ENCODE measurements at regions of chr1 and their contacts with region 1.

Region 1: GRCh38 chr1:186375088-186375953 is at the starts of genes ODR4 and TPR:
- DNase-seq: peak; percentile 92 to 98 (median 97)
- ATAC-seq: peak; percentile 88
- H3K4me3 ChIP-seq: peak within 1 kb of the TSS; percentile 98
- H3K4me3 Mint-ChIP-seq: peak within 1 kb of the TSS; percentile 90 to 99 (median 98)
- H3K27ac ChIP-seq: peak within 1 kb of the TSS; percentile 93
- H3K27ac Mint-ChIP-seq: peak within 1 kb of the TSS; percentile 91 to 99 (median 97)
- H3K4me1 ChIP-seq: peaks cover 24 to 25% of the 10 kb centered on the region in 2 donors
- H3K4me1 Mint-ChIP-seq: peaks cover 28 to 70% (median 54%) of the 10 kb centered on the region in 7 donors
- H3K27me3 ChIP-seq: no peaks in the 10 kb centered on the region
- H3K27me3 Mint-ChIP-seq: no peaks in the 10 kb centered on the region
- total RNA-seq, gene ODR4: 13.6 to 19.6 (median 18.3) TPM
- total RNA-seq, gene TPR: 118 to 195 (median 158) TPM

Region 2: DNA sequence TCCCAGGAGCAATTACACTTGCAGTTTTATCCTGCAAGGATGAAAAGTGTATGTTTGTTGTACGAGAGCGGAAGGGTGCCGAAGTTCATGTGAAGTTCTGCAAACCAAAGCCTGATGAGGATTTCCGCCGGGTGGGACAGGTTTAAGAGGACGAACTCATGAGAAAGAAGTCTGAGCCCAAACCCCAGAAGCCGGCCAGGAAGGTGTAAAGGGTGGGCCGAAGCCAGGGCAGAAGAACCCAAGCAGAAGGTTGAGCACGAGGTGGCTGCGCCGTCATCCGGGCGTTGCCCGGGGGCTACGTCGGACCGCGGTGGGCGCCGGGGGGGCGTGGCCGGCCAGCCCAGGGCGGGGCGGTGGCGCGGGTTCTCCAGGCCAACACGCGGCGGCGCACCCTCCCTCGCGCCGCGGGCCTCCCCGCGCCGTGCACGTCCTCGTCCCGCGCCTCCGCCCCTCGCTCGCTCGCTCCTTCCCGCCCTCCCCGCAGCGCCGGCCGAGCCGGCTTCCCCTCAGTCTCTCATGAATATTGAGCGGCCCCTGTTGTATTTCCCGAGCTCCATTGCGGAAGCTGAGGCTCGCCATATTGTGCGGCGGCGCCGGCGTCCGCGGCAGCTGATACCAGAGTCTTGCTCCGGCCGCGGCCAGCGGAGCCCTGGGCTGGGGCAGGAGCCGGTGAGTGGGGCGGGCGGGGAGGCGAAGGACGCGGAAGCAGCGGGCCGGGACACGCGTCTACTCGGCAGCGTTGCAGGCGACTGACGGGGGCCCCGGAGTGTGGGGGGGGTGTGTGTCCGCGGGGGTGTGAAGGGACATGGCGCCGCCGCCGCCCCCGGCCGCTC is 1330.1 kb before region 1 on chr1 and contains the start of gene RNF2:
- CTCF ChIA-PET with region 1: no interaction called
- POLR2A ChIA-PET with region 1: no interaction called
- intact Hi-C with region 1: loop called (anchors 1 to 2 kb)
- DNase-seq: peak; percentile 64 to 80 (median 77)
- ATAC-seq: peak; percentile 95
- H3K4me3 ChIP-seq: peak within 1 kb of the TSS; percentile 74
- H3K4me3 Mint-ChIP-seq: peak within 1 kb of the TSS; percentile 87 to 96 (median 92)
- H3K27ac ChIP-seq: peak within 1 kb of the TSS; percentile 75
- H3K27ac Mint-ChIP-seq: peak within 1 kb of the TSS; percentile 69 to 96 (median 88)
- H3K4me1 ChIP-seq: peaks cover 11 to 15% of the 10 kb centered on the region in 2 donors
- H3K4me1 Mint-ChIP-seq: peaks cover 27 to 56% (median 45%) of the 10 kb centered on the region in 7 donors
- H3K27me3 ChIP-seq: no peaks in the 10 kb centered on the region
- H3K27me3 Mint-ChIP-seq: peaks cover 0 to 26% (median 0%) of the 10 kb centered on the region in 5 donors
- total RNA-seq, gene RNF2: 14.9 to 27.7 (median 19.6) TPM

Region 3: DNA sequence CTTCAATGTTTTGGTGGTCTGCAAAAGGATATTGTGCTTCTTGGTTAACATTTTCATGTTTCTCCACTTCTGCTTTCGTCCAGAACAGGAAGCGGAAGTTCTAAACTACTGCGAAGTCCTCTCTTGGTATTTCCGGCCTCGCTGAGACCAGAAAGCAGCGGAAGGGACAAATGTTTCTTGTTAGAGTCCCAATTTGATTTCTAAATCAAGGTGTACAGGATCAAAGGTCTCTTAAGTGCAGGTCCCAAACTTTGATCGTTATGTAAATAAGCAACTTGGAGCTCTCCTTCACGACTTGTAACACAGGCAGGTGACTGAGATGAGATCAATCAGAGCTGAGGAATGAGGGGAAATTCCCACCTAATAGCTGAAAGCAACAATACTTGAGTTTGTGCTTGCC is 681.2 kb before region 1 on chr1:
- CTCF ChIA-PET with region 1: no interaction called
- POLR2A ChIA-PET with region 1: no interaction called
- intact Hi-C with region 1: loop called in 1 of 2 experiments (anchors 5 kb)
- DNase-seq: peak in 4 of 9 donors; percentile 20 to 26 (median 22)
- ATAC-seq: peak; percentile 60
- H3K4me3 ChIP-seq: peak overlapping the region; percentile 31
- H3K4me3 Mint-ChIP-seq: peak overlapping the region; percentile 73 to 85 (median 78)
- H3K27ac ChIP-seq: peak overlapping the region; percentile 50
- H3K27ac Mint-ChIP-seq: peak overlapping the region; percentile 77 to 96 (median 88)
- H3K4me1 ChIP-seq: peaks cover 0 to 17% of the 10 kb centered on the region in 2 donors
- H3K4me1 Mint-ChIP-seq: peaks cover 11 to 27% (median 14%) of the 10 kb centered on the region in 7 donors
- H3K27me3 ChIP-seq: no peaks in the 10 kb centered on the region
- H3K27me3 Mint-ChIP-seq: peaks cover 0 to 27% (median 9%) of the 10 kb centered on the region in 5 donors

Region 4: GRCh38 chr1:186283374-186283773 is 91.9 kb before region 1 on chr1:
- CTCF ChIA-PET with region 1: no interaction called
- POLR2A ChIA-PET with region 1: interaction called, 3 read pairs
- intact Hi-C with region 1: loop called in 1 of 2 experiments (anchors 1 kb)
- DNase-seq: no peak
- ATAC-seq: no peak
- H3K4me3 ChIP-seq: no peak overlapping the region
- H3K4me3 Mint-ChIP-seq: peak overlapping the region in 3 of 10 donors; percentile 29 to 57 (median 35)
- H3K27ac ChIP-seq: no peak overlapping the region
- H3K27ac Mint-ChIP-seq: peak overlapping the region in 4 of 9 donors; percentile 8 to 89 (median 87)
- H3K4me1 ChIP-seq: peaks cover 0 to 12% of the 10 kb centered on the region in 2 donors
- H3K4me1 Mint-ChIP-seq: peaks cover 19 to 48% (median 39%) of the 10 kb centered on the region in 7 donors
- H3K27me3 ChIP-seq: no peaks in the 10 kb centered on the region
- H3K27me3 Mint-ChIP-seq: peaks cover 0 to 3% (median 0%) of the 10 kb centered on the region in 5 donors

Region 5: DNA sequence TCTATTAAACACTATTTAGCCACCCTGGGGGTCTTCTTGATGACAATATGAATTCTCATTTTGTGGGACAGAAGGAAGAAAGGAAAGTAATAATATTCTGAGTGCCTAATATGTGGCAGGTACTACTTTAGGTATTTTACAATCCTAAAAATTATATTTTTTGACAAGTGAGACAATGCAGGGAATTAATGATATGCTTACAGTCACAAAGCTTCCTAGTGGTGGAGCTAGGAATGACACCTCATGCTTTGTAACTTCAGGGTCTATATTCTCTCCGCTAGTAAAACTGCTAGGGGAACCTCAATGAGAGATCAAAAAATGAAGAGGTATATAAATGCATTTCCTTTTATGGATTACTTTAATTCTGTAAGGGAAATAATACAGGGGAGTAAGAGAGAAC is 44.6 kb before region 1 on chr1:
- CTCF ChIA-PET with region 1: interaction called, 4 read pairs
- POLR2A ChIA-PET with region 1: interaction called, 4 read pairs
- intact Hi-C with region 1: loop called (anchors 5 kb)
- DNase-seq: no peak
- ATAC-seq: no peak
- H3K4me3 ChIP-seq: no peak overlapping the region
- H3K4me3 Mint-ChIP-seq: no peak overlapping the region
- H3K27ac ChIP-seq: no peak overlapping the region
- H3K27ac Mint-ChIP-seq: peak overlapping the region in 4 of 9 donors; percentile 28 to 67 (median 49)
- H3K4me1 ChIP-seq: no peaks in the 10 kb centered on the region
- H3K4me1 Mint-ChIP-seq: peaks cover 0 to 9% (median 4%) of the 10 kb centered on the region in 7 donors
- H3K27me3 ChIP-seq: no peaks in the 10 kb centered on the region
- H3K27me3 Mint-ChIP-seq: no peaks in the 10 kb centered on the region

Region 6: DNA sequence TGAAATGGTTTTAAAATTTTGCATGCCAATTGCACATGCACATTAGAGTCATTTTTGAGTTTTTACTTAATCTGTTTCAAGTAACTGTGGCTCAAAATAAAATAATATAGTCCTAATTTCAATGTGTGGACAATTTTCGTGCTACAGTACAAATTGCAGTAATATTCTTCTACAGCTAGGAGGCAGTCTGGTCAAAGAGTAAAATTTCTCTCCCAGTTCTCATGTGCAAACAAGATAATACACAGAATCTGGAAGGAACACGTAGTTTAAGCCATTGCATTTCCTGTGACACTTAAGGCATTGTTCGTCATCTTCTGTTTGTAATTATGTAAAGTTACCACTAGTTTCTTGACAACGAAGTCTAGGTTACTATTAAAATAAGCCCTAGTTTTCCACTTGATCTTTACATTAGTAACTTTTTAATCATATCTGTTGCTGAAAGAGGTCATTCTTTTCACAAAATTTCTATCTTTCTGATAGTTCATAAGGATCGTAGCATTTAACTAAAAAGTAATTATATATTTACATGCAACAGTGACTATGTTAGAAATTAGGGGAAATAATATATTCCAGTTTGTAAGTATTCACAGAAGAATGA is 29.2 kb after region 1 on chr1:
- CTCF ChIA-PET with region 1: interaction called, 3 read pairs
- POLR2A ChIA-PET with region 1: no interaction called
- intact Hi-C with region 1: loop called in 1 of 2 experiments (anchors 1 kb)
- DNase-seq: peak in 7 of 9 donors; percentile 26 to 61 (median 40)
- ATAC-seq: peak; percentile 95
- H3K4me3 ChIP-seq: no peak overlapping the region
- H3K4me3 Mint-ChIP-seq: no peak overlapping the region
- H3K27ac ChIP-seq: no peak overlapping the region
- H3K27ac Mint-ChIP-seq: peak overlapping the region in 5 of 9 donors; percentile 41 to 78 (median 51)
- H3K4me1 ChIP-seq: no peaks in the 10 kb centered on the region
- H3K4me1 Mint-ChIP-seq: peaks cover 0 to 10% (median 0%) of the 10 kb centered on the region in 7 donors
- H3K27me3 ChIP-seq: no peaks in the 10 kb centered on the region
- H3K27me3 Mint-ChIP-seq: no peaks in the 10 kb centered on the region

Region 7: DNA sequence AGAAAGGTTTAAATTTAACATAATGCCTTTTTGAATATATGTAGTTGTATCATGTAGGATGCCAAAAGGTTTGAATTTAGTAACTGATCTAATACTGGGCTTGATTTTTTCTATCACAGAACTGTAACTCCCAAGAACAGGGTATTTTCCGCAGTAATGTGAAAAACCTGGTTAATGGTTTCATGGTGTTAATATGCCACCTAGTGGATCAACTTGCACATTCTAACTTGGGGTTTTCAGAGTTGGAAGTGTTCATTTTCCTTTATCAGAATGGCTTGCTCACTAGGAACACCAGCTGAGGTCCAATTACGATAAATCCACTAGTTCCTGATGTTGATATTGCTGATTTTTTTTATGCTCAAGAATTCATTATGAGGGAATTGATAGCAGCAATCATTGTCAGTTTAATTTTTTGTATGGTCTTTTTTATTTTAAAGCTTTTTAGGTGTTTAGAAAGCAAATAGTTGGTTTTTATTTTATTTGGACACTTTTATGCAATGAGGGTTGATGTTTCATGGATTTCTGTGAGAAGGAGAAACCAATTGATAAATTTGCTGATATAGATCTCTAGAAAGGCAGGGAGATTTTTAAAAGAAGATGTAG is 610.7 kb after region 1 on chr1:
- CTCF ChIA-PET with region 1: no interaction called
- POLR2A ChIA-PET with region 1: no interaction called
- intact Hi-C with region 1: loop called (anchors 1 kb)
- DNase-seq: peak in 5 of 9 donors; percentile 25 to 39 (median 36)
- ATAC-seq: peak; percentile 58
- H3K4me3 ChIP-seq: no peak overlapping the region
- H3K4me3 Mint-ChIP-seq: no peak overlapping the region
- H3K27ac ChIP-seq: no peak overlapping the region
- H3K27ac Mint-ChIP-seq: no peak overlapping the region
- H3K4me1 ChIP-seq: no peaks in the 10 kb centered on the region
- H3K4me1 Mint-ChIP-seq: no peaks in the 10 kb centered on the region
- H3K27me3 ChIP-seq: no peaks in the 10 kb centered on the region
- H3K27me3 Mint-ChIP-seq: peaks cover 0 to 23% (median 3%) of the 10 kb centered on the region in 5 donors

Measured in naive thymus-derived CD4-positive, alpha-beta T cell (primary cell).